ENCODE measurements at regions of chr4 and their contacts with region 1.

Region 1: GRCh38 chr4:2418650-2419571 is at the start of gene CFAP99:
- DNase-seq: peak; percentile 94
- H3K4me3 Mint-ChIP-seq: peak within 1 kb of the TSS; percentile 85
- H3K27ac Mint-ChIP-seq: peak within 1 kb of the TSS; percentile 82
- H3K4me1 Mint-ChIP-seq: peaks cover 39% of the 10 kb centered on the region
- H3K27me3 Mint-ChIP-seq: peaks cover 55% of the 10 kb centered on the region
- total RNA-seq, gene CFAP99: not detected in 2 replicates

Region 2: GRCh38 chr4:1721004-1721665 is 697.8 kb before region 1 on chr4 and contains the starts of genes TACC3 and TMEM129:
- intact Hi-C with region 1: loop called (anchors 2 kb)
- DNase-seq: peak; percentile 90
- H3K4me3 Mint-ChIP-seq: peak within 1 kb of the TSS; percentile 94
- H3K27ac Mint-ChIP-seq: peak within 1 kb of the TSS; percentile 97
- H3K4me1 Mint-ChIP-seq: peaks cover 45% of the 10 kb centered on the region
- H3K27me3 Mint-ChIP-seq: no peaks in the 10 kb centered on the region
- total RNA-seq, gene TACC3: 134 and 139 TPM in 2 replicates
- total RNA-seq, gene TMEM129: 27.4 and 28.4 TPM in 2 replicates

Region 3: DNA sequence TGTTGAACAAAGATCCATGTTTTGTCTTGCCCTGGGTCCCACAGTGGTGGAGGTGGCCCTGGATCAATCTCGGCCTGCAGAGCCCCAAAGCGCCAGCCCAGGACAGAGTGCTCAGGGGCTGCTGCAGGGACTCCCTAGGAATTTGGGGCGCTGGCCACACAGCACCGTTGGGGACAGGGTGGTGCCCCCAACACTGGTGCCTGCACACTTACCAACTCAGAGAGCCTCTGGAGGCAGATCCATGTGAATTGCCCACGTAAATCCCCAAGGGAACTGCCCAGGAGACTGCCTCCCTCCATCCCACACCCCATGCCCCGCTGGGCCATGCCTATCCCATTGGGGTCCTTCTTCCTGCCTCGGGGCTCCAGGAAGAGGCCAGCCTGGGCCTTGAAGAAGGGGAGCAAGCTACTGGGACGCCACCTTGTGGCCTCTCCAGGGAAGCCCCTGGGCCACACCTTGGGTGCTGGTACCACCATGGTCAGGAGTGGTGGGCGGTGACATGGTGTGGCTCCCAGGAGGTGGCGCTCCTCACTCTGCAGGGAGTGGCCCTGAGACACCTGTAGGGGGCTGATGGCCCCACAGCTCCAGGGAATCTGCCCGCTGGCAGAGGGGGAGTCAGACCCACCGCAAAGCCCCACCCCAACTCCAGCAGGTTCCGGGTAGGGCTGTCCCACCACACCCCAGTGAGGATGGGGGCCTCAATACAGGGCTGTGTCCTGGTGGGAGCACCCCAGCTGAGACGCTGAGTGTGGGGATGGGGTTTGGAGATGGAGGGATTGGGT is 22.7 kb after region 1 on chr4:
- intact Hi-C with region 1: loop called (anchors 2 kb)
- DNase-seq: peak; percentile 55
- H3K4me3 Mint-ChIP-seq: no peak overlapping the region
- H3K27ac Mint-ChIP-seq: no peak overlapping the region
- H3K4me1 Mint-ChIP-seq: no peaks in the 10 kb centered on the region
- H3K27me3 Mint-ChIP-seq: peaks cover 2% of the 10 kb centered on the region

Region 4: GRCh38 chr4:2934813-2935761 is 516.2 kb after region 1 on chr4:
- intact Hi-C with region 1: loop called (anchors 10 kb)
- DNase-seq: peak; percentile 95
- H3K4me3 Mint-ChIP-seq: peak overlapping the region; percentile 94
- H3K27ac Mint-ChIP-seq: peak overlapping the region; percentile 87
- H3K4me1 Mint-ChIP-seq: peaks cover 49% of the 10 kb centered on the region
- H3K27me3 Mint-ChIP-seq: no peaks in the 10 kb centered on the region

Measured in activated T-helper 1 cell treated with anti-CD3 and anti-CD28 coated beads, Interleukin-12 subunit alpha, Interleukin-12 subunit beta, Interleukin-2, Interleukin-4 antibody, amounts not matched to agents 30 ng/mL and 10 ng/mL and 1 ng/mL, durations not matched to agents 14 hours and 24 hours and 36 hours (primary cell).